H1 (cell line): ENCODE measurements at regions of chr3 and their contacts with region 1.

Region 1: GRCh38 chr3:176872771-176873209 is 324.5 kb downstream of the TBL1XR1 start:
- DNase-seq: peak; percentile 54 to 68
- H3K4me3 ChIP-seq: no peak overlapping the region
- H3K27ac ChIP-seq: no peak overlapping the region
- H3K4me1 ChIP-seq: no peaks in the 10 kb centered on the region
- H3K27me3 ChIP-seq: no peaks in the 10 kb centered on the region
- CTCF ChIP-seq: peak; percentile 35 to 95 (median 82)
- EP300 ChIP-seq: no peak
- POLR2A ChIP-seq: no peak
- RAD21 ChIP-seq: peak; percentile 83 to 85

Region 2: GRCh38 chr3:176755552-176755951 is 117.2 kb before region 1 on chr3:
- CTCF ChIA-PET with region 1: no interaction called
- POLR2A ChIA-PET with region 1: no interaction called
- DNase-seq: no peak
- H3K4me3 ChIP-seq: no peak overlapping the region
- H3K27ac ChIP-seq: no peak overlapping the region
- H3K4me1 ChIP-seq: no peaks in the 10 kb centered on the region
- H3K27me3 ChIP-seq: no peaks in the 10 kb centered on the region
- CTCF ChIP-seq: no peak
- EP300 ChIP-seq: no peak
- POLR2A ChIP-seq: no peak
- RAD21 ChIP-seq: no peak

Region 3: DNA sequence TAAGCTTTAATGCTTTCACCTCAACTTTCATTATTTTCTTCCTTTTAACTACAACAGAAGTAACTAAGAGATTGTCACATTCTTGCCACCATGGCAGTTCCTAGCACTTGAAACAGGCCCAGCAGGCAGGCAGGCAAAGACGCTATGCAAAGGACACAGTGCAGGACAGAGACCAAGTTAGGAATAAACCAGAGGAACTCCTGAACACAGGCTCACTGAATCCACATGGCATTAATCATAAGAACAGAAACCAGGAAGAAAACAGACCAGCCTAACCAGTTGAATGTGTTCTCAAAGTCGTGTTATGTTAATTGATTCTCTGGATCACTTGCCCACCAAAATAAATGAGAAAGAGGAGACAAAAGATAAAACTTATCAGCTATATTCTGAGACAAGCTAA is 73.1 kb before region 1 on chr3:
- CTCF ChIA-PET with region 1: no interaction called
- POLR2A ChIA-PET with region 1: no interaction called
- DNase-seq: no peak
- H3K4me3 ChIP-seq: no peak overlapping the region
- H3K27ac ChIP-seq: no peak overlapping the region
- H3K4me1 ChIP-seq: peaks cover 0 to 3% (median 0%) of the 10 kb centered on the region in 4 experiments; a peak in 3 of 7 replicates
- H3K27me3 ChIP-seq: no peaks in the 10 kb centered on the region
- CTCF ChIP-seq: no peak
- EP300 ChIP-seq: no peak
- POLR2A ChIP-seq: no peak
- RAD21 ChIP-seq: no peak

Region 4: DNA sequence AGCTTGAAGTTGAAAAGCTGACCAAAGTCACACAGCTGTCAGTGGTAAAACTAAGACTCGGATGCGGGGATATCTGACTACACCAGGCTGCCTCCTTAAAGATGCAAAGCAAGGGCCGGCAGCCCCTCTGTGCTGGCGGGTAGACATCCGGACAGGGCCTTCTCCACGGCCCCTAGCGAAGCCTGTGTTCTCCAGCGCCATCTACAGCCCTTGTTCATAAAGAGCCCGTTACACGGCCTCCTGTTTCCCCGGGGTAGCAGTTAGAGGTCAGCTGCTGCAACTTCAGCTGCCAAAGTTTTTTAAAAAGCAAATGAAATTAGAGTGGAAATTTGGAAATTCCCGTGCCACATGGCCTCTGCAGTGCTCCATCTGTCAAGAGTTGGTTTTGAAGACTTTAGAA is 58.5 kb before region 1 on chr3:
- CTCF ChIA-PET with region 1: interaction called, 10 read pairs
- POLR2A ChIA-PET with region 1: no interaction called
- DNase-seq: peak; percentile 76 to 83
- H3K4me3 ChIP-seq: no peak overlapping the region
- H3K27ac ChIP-seq: no peak overlapping the region
- H3K4me1 ChIP-seq: no peaks in the 10 kb centered on the region
- H3K27me3 ChIP-seq: no peaks in the 10 kb centered on the region
- CTCF ChIP-seq: peak; percentile 71 to 84 (median 80)
- EP300 ChIP-seq: no peak
- POLR2A ChIP-seq: no peak
- RAD21 ChIP-seq: peak; percentile 72 to 87

Region 5: DNA sequence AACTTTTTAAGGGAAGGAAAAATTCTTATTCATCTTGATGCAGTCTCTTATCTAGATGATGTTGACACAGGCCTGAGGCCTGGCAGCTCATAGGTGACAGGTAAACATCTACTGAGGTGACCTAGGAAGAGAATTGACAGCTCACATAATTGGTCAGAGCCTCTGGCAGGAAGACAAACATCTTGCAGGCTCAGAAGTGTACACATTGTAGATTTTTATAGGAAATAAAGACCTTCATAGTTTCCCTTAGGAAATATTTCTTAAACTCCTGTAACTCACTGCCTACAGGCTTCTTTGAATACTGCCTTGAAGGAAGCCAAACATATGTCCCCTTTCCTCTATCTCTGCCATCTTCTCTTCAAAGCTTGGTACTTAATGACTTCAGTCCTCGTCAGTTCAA is 16.8 kb before region 1 on chr3:
- CTCF ChIA-PET with region 1: interaction called, 11 read pairs
- POLR2A ChIA-PET with region 1: no interaction called
- DNase-seq: no peak
- H3K4me3 ChIP-seq: no peak overlapping the region
- H3K27ac ChIP-seq: no peak overlapping the region
- H3K4me1 ChIP-seq: no peaks in the 10 kb centered on the region
- H3K27me3 ChIP-seq: no peaks in the 10 kb centered on the region
- CTCF ChIP-seq: no peak
- EP300 ChIP-seq: no peak
- POLR2A ChIP-seq: no peak
- RAD21 ChIP-seq: no peak

Region 6: GRCh38 chr3:176861137-176861536 is 11.7 kb before region 1 on chr3:
- CTCF ChIA-PET with region 1: interaction called, 11 read pairs
- POLR2A ChIA-PET with region 1: no interaction called
- DNase-seq: no peak
- H3K4me3 ChIP-seq: no peak overlapping the region
- H3K27ac ChIP-seq: no peak overlapping the region
- H3K4me1 ChIP-seq: no peaks in the 10 kb centered on the region
- H3K27me3 ChIP-seq: no peaks in the 10 kb centered on the region
- CTCF ChIP-seq: no peak
- EP300 ChIP-seq: no peak
- POLR2A ChIP-seq: no peak
- RAD21 ChIP-seq: no peak

Region 7: DNA sequence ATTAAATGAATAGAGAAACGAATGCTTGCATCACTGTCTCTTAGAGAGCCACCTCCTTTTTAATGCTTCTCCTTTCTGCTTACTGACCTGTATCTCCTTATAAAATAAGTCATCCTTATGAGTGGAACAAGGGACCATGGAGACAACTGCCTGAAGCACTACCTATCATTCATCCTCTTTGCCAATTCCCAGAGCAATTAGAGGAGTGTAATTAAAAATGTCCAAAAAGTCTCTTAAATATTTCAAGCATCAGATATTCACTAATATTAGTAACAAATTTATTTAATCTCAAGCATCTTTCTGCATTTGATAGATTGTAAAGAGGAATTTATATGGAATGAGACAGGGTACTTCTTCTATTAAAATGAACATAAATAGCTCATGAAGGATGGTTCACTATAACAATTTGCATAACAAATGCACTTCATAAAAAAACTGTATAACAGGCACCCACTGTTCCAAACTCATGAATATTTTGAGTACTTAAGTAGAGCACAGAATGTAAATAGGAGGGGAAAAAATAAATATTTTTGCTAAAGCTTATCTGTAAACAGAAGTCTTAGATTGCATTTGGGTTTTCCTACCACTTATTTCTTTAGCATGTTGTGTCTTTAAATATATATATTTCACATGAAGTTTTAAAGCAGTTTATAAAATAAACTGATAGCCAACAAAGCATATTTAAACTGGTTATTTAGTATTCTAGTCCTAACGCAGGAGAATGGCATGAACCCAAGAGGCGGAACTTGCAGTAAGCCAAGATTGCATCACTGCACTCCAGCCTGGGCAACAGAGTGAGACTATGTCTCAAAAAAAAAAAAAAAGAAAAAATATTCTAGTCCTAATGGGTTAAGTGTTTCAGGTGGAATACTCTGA is 55.2 kb after region 1 on chr3:
- CTCF ChIA-PET with region 1: interaction called, 27 read pairs
- POLR2A ChIA-PET with region 1: no interaction called
- DNase-seq: no peak
- H3K4me3 ChIP-seq: no peak overlapping the region
- H3K27ac ChIP-seq: no peak overlapping the region
- H3K4me1 ChIP-seq: no peaks in the 10 kb centered on the region
- H3K27me3 ChIP-seq: no peaks in the 10 kb centered on the region
- CTCF ChIP-seq: no peak
- EP300 ChIP-seq: no peak
- POLR2A ChIP-seq: no peak
- RAD21 ChIP-seq: no peak

Region 8: GRCh38 chr3:176939022-176939817 is 66.4 kb after region 1 on chr3:
- CTCF ChIA-PET with region 1: interaction called, 46 read pairs
- POLR2A ChIA-PET with region 1: interaction called, 5 read pairs
- DNase-seq: no peak
- H3K4me3 ChIP-seq: no peak overlapping the region
- H3K27ac ChIP-seq: no peak overlapping the region
- H3K4me1 ChIP-seq: no peaks in the 10 kb centered on the region
- H3K27me3 ChIP-seq: no peaks in the 10 kb centered on the region
- CTCF ChIP-seq: peak in 2 of 3 experiments; percentile 72 to 81; a peak in 3 of 4 replicates
- EP300 ChIP-seq: no peak
- POLR2A ChIP-seq: no peak
- RAD21 ChIP-seq: peak; percentile 95 to 96